Activated CD8-positive, alpha-beta T cell treated with anti-CD3 and anti-CD28 coated beads for 36 hours (primary cell): ENCODE measurements at regions of chr12 and their contacts with region 1.

Region 1: DNA sequence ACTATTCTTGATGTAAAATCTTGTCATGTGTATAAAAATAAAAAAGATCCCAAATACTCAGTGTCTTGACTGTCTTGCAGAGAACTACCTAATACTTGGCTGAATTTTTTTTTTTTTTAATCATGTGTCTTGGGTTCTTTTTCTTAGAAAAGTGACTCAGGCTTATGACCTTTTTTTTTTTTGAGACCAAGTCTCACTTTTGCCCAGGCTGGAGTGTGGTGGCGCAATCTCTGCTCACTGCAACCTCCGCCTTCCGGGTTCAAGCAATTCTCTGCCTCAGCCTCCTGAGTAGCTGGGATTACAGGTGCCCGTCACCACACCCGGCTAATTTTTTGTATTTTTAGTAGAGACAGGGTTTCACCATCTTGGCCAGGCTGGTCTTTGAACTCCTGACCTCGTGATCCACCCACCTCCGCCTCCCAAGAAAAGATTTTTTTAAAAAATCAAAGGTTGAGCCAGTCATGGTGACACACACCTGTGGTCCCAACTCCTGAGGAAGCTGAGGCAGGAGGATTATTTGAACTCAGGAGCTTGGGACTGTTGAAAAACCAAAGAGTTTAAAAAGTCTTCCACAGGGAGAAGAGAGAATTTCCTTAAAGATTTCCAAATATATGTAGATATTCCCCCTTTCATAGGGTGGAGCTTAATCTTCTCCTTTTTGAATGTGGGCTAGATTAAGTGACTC is 17.7 kb upstream of the TDG start:
- DNase-seq: peak; percentile 48
- ATAC-seq: peak; percentile 37
- H3K4me3 Mint-ChIP-seq: no peak overlapping the region
- H3K27ac Mint-ChIP-seq: peak overlapping the region; percentile 71
- H3K4me1 Mint-ChIP-seq: peaks cover 60% of the 10 kb centered on the region
- H3K27me3 Mint-ChIP-seq: no peaks in the 10 kb centered on the region
- CTCF ChIP-seq: no peak

Region 2: GRCh38 chr12:103965590-103966504 is 17.8 kb after region 1 on chr12 and contains the start of gene TDG:
- CTCF ChIA-PET with region 1: interaction called, 4 read pairs
- POLR2A ChIA-PET with region 1: interaction called, 32 read pairs
- intact Hi-C with region 1: no loop called
- DNase-seq: peak; percentile 99
- ATAC-seq: peak; percentile 94
- H3K4me3 Mint-ChIP-seq: peak within 1 kb of the TSS; percentile 90
- H3K27ac Mint-ChIP-seq: peak within 1 kb of the TSS; percentile 98
- H3K4me1 Mint-ChIP-seq: peaks cover 40% of the 10 kb centered on the region
- H3K27me3 Mint-ChIP-seq: no peaks in the 10 kb centered on the region
- CTCF ChIP-seq: no peak
- total RNA-seq, gene TDG: 37.4 to 37.5 TPM